ENCODE measurements at regions of chr7 and their contacts with region 1.

Region 1: GRCh38 chr7:158976849-158977593 is 120.7 kb downstream of the DYNC2I1 start:
- DNase-seq: peak; percentile 9
- H3K4me3 ChIP-seq: peak overlapping the region; percentile 10 to 60 (median 32)
- H3K27ac ChIP-seq: peak overlapping the region in 3 of 4 donors; percentile 43 to 50 (median 49)
- H3K4me1 ChIP-seq: peaks cover 9 to 27% (median 13%) of the 10 kb centered on the region in 3 donors
- H3K27me3 ChIP-seq: no peaks in the 10 kb centered on the region
- CTCF ChIP-seq: peak; percentile 68 to 97 (median 94)
- POLR2A ChIP-seq: no peak

Region 2: GRCh38 chr7:158694654-158695053 is 282.4 kb before region 1 on chr7:
- intact Hi-C with region 1: loop called (anchors 5 kb)
- DNase-seq: no peak
- H3K4me3 ChIP-seq: no peak overlapping the region
- H3K27ac ChIP-seq: no peak overlapping the region
- H3K4me1 ChIP-seq: peaks cover 0 to 7% (median 0%) of the 10 kb centered on the region in 3 donors
- H3K27me3 ChIP-seq: no peaks in the 10 kb centered on the region
- CTCF ChIP-seq: no peak
- POLR2A ChIP-seq: no peak

Region 3: GRCh38 chr7:158917818-158918217 is 59.2 kb before region 1 on chr7:
- intact Hi-C with region 1: no loop called
- DNase-seq: no peak
- H3K4me3 ChIP-seq: no peak overlapping the region
- H3K27ac ChIP-seq: no peak overlapping the region
- H3K4me1 ChIP-seq: no peaks in the 10 kb centered on the region
- H3K27me3 ChIP-seq: no peaks in the 10 kb centered on the region
- CTCF ChIP-seq: no peak
- POLR2A ChIP-seq: no peak

Measured in esophagus squamous epithelium (tissue), 5 donors.